Left cardiac atrium (tissue), 4 donors: ENCODE measurements at regions of chr11 and their contacts with region 1.

Region 1: DNA sequence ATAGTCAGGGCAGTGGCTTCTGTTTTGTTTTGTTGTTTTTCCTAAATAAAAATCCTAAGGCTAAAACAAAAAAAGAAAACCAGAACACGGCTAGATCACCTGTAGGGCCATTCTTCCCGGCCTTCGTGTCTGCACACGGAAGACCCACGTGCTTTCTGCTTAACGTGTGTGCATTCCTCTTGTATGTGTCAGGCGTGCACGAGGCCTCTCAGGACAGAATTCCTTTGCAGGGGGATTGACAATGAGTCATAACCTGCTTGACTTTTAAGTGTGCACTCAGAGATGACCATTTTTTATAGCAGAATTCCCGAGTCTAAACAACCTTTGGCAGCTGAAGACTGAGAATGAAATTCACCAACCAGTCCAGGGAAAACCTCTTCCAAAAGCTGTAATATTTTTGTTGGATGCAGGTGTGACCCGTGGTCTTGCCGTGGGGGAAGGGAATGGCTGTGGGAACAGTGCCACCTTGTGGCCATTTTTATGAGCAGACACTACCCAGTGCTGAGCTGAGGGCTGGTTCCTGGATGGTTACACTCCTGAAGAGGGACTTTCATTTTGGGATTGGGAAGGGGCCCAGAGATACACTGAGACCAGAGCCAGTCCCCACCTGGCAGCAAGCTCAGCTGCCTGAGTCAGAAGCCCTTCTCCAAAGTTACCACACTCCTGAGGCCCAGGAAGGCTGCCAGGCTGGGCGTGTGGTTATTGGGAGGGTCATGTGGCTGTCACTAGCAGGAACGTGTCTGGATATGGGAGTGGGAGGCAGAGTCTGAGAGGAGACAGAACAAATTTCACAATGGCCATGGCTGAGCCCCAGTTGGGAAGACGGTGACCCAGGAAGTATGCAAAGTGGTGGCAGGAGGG is 35.8 kb upstream of the DKK3 start:
- DNase-seq: peak; percentile 87
- ATAC-seq: peak; percentile 85 to 87

Region 2: DNA sequence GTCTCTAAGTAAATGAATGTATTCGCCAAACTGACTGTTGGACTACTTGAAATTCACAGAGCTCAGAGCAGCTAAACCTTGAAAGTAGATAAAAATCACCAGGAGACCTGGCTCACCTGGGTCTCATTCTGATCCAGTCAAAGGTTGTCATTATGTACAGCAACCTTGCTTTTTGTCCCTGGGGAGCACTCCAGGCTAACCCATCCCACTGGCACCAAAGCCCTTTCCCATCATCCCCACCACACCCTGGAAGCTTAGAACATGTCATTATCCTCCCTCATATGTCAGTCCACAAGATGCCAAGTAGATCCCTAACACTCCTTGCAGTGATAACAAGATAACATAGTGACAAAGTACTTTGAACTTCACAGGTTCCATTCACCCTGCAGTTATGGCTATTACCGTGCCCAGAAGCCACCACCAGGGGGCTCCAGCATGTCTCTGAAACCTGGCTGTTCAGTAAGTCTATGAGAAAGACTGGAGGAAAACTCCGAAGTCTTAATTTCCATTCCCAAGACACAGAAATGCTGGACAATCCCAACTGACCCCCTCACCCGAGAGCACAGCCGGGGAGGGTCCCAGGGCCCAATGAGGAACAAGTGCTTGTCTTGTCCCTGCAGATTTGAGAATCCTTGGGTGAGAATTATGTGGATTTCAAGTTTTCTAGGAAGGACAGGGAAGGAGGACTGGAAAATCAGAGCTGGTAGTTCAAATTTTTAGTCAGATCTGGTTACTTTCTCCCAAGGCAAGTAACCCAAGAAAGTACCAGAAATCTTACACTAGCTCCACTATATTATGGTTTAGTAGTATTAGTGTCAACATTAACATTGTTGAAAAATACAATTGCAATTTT is 245.4 kb before region 1 on chr11:
- intact Hi-C with region 1: loop called (anchors 5 to 10 kb)
- DNase-seq: peak; percentile 87
- ATAC-seq: peak; percentile 71 to 91

Region 3: GRCh38 chr11:11806586-11806985 is 237.6 kb before region 1 on chr11:
- intact Hi-C with region 1: loop called in 1 of 2 experiments (anchors 10 kb)
- DNase-seq: no peak
- ATAC-seq: peak in 1 of 2 donors; percentile 49

Region 4: GRCh38 chr11:11931461-11932055 is 112.6 kb before region 1 on chr11:
- intact Hi-C with region 1: loop called (anchors 2 to 5 kb)
- DNase-seq: no peak
- ATAC-seq: peak; percentile 80 to 82

Region 5: GRCh38 chr11:12100841-12101242 is 56.7 kb after region 1 on chr11:
- intact Hi-C with region 1: no loop called
- DNase-seq: peak; percentile 45
- ATAC-seq: peak; percentile 45 to 66

Region 6: GRCh38 chr11:12235947-12236743 is 192.0 kb after region 1 on chr11:
- intact Hi-C with region 1: loop called in 1 of 2 experiments (anchors 5 kb)
- DNase-seq: no peak
- ATAC-seq: peak; percentile 10 to 31

Region 7: GRCh38 chr11:12281571-12282478 is 237.6 kb after region 1 on chr11:
- intact Hi-C with region 1: loop called (anchors 1 to 2 kb)
- DNase-seq: peak; percentile 86
- ATAC-seq: peak; percentile 63 to 65